CD4-positive, alpha-beta T cell (primary cell): ENCODE measurements at regions of chr6 and their contacts with region 1.

Region 1: DNA sequence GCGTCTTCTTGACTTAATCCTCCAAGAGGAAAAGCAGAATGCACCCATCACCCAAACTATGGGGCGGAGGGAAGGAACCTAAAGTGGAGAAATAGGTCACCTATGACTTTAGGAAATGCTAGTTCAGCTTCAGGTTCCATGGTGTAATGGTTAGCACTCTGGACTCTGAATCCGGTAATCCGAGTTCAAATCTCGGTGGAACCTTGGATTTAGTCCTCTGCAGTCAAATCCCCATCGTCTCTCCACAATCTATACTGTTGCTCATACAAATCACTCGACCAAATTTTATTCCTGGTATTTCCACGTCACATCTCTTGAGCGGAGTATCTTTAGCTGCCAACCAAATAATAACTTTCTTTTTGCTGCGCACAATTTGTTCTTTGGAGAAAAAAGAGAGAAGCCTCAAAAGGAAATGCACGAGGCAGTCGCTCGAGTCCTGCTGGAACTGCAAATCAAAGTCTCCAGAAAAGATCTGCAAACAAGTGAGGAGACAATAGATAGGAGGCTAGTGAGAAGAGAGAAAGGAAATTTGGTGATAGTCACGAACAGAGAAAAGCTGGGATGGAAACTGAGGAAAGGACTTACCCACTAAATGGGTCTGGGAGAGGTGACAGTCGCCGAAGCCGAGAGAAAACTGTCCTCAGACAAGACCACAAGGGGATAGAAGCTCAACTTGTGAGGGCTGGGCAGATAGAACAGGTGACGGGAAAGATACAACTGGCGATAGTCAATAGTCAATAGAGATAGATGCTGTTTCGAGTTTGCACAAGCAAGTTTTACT is 16.6 kb downstream of the POM121L2 start:
- DNase-seq: no peak
- ATAC-seq: no peak
- H3K4me3 ChIP-seq: no peak overlapping the region
- H3K4me3 Mint-ChIP-seq: peak overlapping the region; percentile 11
- H3K27ac ChIP-seq: no peak overlapping the region
- H3K27ac Mint-ChIP-seq: peak overlapping the region; percentile 2
- H3K4me1 ChIP-seq: no peaks in the 10 kb centered on the region
- H3K4me1 Mint-ChIP-seq: no peaks in the 10 kb centered on the region
- H3K27me3 ChIP-seq: peaks cover 77 to 88% of the 10 kb centered on the region in 2 experiments
- H3K27me3 Mint-ChIP-seq: peaks cover 95% of the 10 kb centered on the region
- CTCF ChIP-seq: no peak

Region 2: DNA sequence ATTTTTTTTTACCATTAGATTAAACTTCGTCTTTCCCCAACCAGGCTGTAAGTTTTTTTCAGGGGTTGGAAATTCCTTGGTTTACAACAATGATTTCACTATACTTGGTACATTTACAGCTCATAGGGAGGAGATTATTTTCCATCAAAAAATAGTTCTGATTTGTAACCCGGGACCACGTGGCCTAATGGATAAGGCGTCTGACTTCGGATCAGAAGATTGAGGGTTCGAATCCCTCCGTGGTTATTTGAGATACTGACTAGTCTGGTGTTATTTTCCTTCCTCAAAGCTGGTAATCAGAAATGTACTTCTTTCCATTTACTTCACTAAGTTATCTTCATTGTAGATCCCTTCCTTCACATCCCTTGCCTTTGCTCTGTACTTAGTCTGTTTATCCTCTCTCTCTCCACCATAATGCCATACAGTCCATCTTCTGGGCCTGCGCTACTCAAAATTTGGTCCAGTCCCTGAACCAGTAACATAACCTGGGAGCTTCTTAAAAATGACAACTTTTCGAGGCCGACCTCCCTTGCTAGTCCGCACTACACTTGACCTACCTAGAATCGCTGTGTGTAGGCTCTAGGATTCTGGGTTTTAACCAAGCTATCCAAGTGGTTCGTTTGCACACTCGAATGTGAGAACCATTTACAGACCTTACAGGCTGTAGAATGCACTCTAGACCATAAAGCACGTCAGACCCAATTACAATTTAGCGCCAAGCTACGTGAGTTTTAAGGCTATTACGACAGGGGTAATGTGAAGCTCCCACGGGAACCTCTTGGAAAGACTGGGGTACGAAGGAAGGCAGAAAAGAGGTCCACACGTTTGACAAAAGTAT is 972.6 kb before region 1 on chr6:
- CTCF ChIA-PET with region 1: no interaction called
- POLR2A ChIA-PET with region 1: no interaction called
- intact Hi-C with region 1: loop called in 1 of 2 experiments (anchors 10 kb)
- DNase-seq: peak in 10 of 14 experiments; percentile 20 to 88 (median 52)
- ATAC-seq: peak; percentile 75
- H3K4me3 ChIP-seq: peak overlapping the region; percentile 54
- H3K4me3 Mint-ChIP-seq: peak overlapping the region; percentile 96
- H3K27ac ChIP-seq: no peak overlapping the region
- H3K27ac Mint-ChIP-seq: peak overlapping the region; percentile 93
- H3K4me1 ChIP-seq: peaks cover 23% of the 10 kb centered on the region
- H3K4me1 Mint-ChIP-seq: peaks cover 30% of the 10 kb centered on the region
- H3K27me3 ChIP-seq: no peaks in the 10 kb centered on the region
- H3K27me3 Mint-ChIP-seq: peaks cover 35% of the 10 kb centered on the region
- CTCF ChIP-seq: no peak

Region 3: GRCh38 chr6:27002447-27002846 is 293.0 kb before region 1 on chr6:
- CTCF ChIA-PET with region 1: no interaction called
- POLR2A ChIA-PET with region 1: no interaction called
- intact Hi-C with region 1: no loop called
- DNase-seq: no peak
- ATAC-seq: no peak
- H3K4me3 ChIP-seq: no peak overlapping the region
- H3K4me3 Mint-ChIP-seq: no peak overlapping the region
- H3K27ac ChIP-seq: no peak overlapping the region
- H3K27ac Mint-ChIP-seq: no peak overlapping the region
- H3K4me1 ChIP-seq: no peaks in the 10 kb centered on the region
- H3K4me1 Mint-ChIP-seq: no peaks in the 10 kb centered on the region
- H3K27me3 ChIP-seq: peaks cover 6 to 8% of the 10 kb centered on the region in 2 experiments
- H3K27me3 Mint-ChIP-seq: peaks cover 26% of the 10 kb centered on the region
- CTCF ChIP-seq: no peak

Region 4: GRCh38 chr6:27230758-27231111 is 64.8 kb before region 1 on chr6:
- CTCF ChIA-PET with region 1: no interaction called
- POLR2A ChIA-PET with region 1: no interaction called
- intact Hi-C with region 1: no loop called
- DNase-seq: no peak
- ATAC-seq: no peak
- H3K4me3 ChIP-seq: no peak overlapping the region
- H3K4me3 Mint-ChIP-seq: no peak overlapping the region
- H3K27ac ChIP-seq: no peak overlapping the region
- H3K27ac Mint-ChIP-seq: no peak overlapping the region
- H3K4me1 ChIP-seq: no peaks in the 10 kb centered on the region
- H3K4me1 Mint-ChIP-seq: peaks cover 6% of the 10 kb centered on the region
- H3K27me3 ChIP-seq: peaks cover 50 to 76% of the 10 kb centered on the region in 2 experiments
- H3K27me3 Mint-ChIP-seq: peaks cover 84% of the 10 kb centered on the region
- CTCF ChIP-seq: no peak

Region 5: DNA sequence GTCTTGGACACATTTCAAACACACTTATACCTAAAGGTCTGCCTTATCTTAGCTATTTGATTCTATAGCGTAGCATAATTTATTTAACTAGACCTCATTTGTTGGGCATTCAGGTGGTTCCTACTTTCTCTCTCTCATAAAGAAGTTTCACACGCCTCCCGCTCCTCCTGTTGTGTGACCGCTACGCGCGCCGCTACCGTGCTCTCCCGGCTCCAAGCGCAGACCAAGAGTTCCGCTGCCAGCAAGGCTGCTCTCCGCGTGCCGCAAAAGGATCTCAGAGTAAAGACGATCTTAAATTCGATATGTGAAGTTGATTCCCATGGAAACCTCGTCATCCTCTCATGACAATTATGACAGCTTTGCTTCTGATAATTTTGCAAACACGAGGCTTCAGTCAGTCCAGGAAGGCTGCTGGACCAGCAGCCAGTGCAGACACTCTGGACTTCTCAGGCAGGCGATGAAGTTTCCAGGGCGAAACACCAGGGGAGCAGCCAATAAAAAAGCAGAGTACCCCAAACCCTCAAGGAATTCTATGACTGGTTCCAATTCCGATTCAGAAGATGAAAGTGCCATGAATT is 27.5 kb before region 1 on chr6:
- CTCF ChIA-PET with region 1: no interaction called
- POLR2A ChIA-PET with region 1: no interaction called
- intact Hi-C with region 1: no loop called
- DNase-seq: no peak
- ATAC-seq: no peak
- H3K4me3 ChIP-seq: no peak overlapping the region
- H3K4me3 Mint-ChIP-seq: no peak overlapping the region
- H3K27ac ChIP-seq: no peak overlapping the region
- H3K27ac Mint-ChIP-seq: no peak overlapping the region
- H3K4me1 ChIP-seq: no peaks in the 10 kb centered on the region
- H3K4me1 Mint-ChIP-seq: no peaks in the 10 kb centered on the region
- H3K27me3 ChIP-seq: peaks cover 36 to 68% of the 10 kb centered on the region in 2 experiments
- H3K27me3 Mint-ChIP-seq: peaks cover 74% of the 10 kb centered on the region
- CTCF ChIP-seq: no peak

Region 6: GRCh38 chr6:27280064-27280539 is 15.4 kb before region 1 on chr6:
- CTCF ChIA-PET with region 1: no interaction called
- POLR2A ChIA-PET with region 1: no interaction called
- intact Hi-C with region 1: loop called in 1 of 2 experiments (anchors 1 kb)
- DNase-seq: peak in 4 of 14 experiments; percentile 9 to 32 (median 24)
- ATAC-seq: no peak
- H3K4me3 ChIP-seq: no peak overlapping the region
- H3K4me3 Mint-ChIP-seq: peak overlapping the region; percentile 30
- H3K27ac ChIP-seq: no peak overlapping the region
- H3K27ac Mint-ChIP-seq: peak overlapping the region; percentile 45
- H3K4me1 ChIP-seq: peaks cover 2% of the 10 kb centered on the region
- H3K4me1 Mint-ChIP-seq: peaks cover 9% of the 10 kb centered on the region
- H3K27me3 ChIP-seq: peaks cover 76 to 87% of the 10 kb centered on the region in 2 experiments
- H3K27me3 Mint-ChIP-seq: peaks cover 95% of the 10 kb centered on the region
- CTCF ChIP-seq: no peak

Region 7: DNA sequence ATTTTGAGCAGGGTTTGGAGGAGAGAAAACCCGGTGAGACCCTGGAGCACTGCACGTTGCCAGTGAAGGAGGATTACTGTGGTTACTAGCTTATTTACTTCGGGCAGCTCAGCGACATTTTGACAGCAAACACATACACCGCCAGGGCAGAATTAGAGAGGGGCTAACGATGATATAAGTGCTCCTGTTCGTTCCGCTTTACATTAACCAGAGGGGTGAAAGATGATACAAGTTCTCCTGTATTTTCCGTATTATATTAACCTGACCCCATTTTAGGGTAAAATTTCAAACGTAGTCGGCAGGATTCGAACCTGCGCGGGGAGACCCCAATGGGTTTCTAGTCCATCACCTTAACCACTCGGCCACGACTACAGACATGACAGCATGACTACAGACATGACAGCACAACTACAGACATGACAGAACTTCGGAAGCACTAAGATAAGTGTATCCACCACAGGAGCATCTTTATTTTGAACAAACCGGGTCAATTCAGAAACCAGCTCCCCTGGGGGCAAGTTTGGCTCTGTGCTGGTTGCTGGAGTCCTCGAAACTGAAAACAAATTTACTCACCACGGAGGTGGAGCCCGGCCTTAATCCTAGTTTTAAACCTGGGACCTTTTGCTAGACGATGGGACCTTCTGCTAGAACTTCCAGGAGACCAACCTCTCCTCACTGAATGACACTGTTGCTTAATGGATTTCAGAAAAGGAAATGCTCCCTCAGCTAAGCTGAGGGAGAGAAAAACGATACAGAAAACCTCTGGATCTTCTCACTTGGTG is 257.8 kb after region 1 on chr6:
- CTCF ChIA-PET with region 1: no interaction called
- POLR2A ChIA-PET with region 1: no interaction called
- intact Hi-C with region 1: loop called in 1 of 2 experiments (anchors 10 kb)
- DNase-seq: no peak
- ATAC-seq: no peak
- H3K4me3 ChIP-seq: no peak overlapping the region
- H3K4me3 Mint-ChIP-seq: no peak overlapping the region
- H3K27ac ChIP-seq: no peak overlapping the region
- H3K27ac Mint-ChIP-seq: no peak overlapping the region
- H3K4me1 ChIP-seq: peaks cover 5% of the 10 kb centered on the region
- H3K4me1 Mint-ChIP-seq: peaks cover 4% of the 10 kb centered on the region
- H3K27me3 ChIP-seq: peaks cover 72 to 94% of the 10 kb centered on the region in 2 experiments
- H3K27me3 Mint-ChIP-seq: peaks cover 89% of the 10 kb centered on the region
- CTCF ChIP-seq: no peak

Region 8: DNA sequence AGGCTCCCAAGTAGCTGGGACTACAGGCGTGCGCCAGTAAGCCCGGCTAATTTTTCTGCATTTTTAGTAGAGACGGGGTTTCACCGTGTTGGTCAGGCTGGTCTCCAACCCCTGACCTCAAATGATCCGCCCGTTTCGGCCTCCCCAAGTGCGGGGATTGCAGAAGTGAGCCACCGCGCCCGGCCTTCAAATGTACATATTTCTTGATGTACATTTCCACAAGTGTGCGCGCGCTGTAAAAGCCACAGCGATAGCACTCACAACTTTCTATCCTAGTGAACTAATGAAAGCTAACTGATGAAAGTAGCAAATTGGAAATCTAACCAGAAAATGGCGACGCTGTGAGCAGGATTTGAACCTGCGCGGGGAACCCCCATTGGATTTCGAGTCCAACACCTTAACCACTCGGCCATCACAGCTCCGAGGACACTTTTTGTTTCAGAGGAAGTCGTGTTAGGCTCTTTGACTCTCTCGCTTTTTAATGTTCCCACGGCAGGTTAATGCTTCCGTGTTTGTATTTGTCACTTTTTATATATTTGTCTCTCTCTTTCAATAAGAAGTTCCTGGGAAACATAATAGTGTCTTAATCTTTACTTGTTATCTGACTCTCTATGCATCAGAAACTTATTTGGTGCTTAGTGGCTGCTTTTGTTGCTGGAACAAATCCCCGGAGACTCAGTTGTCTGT is 376.8 kb after region 1 on chr6:
- CTCF ChIA-PET with region 1: no interaction called
- POLR2A ChIA-PET with region 1: no interaction called
- intact Hi-C with region 1: loop called (anchors 2 to 5 kb)
- DNase-seq: peak in 1 of 14 experiments; percentile 50
- ATAC-seq: peak; percentile 41
- H3K4me3 ChIP-seq: no peak overlapping the region
- H3K4me3 Mint-ChIP-seq: peak overlapping the region; percentile 5
- H3K27ac ChIP-seq: no peak overlapping the region
- H3K27ac Mint-ChIP-seq: peak overlapping the region; percentile 3
- H3K4me1 ChIP-seq: peaks cover 28% of the 10 kb centered on the region
- H3K4me1 Mint-ChIP-seq: peaks cover 40% of the 10 kb centered on the region
- H3K27me3 ChIP-seq: peaks cover 66 to 94% of the 10 kb centered on the region in 2 experiments
- H3K27me3 Mint-ChIP-seq: peaks cover 98% of the 10 kb centered on the region
- CTCF ChIP-seq: no peak

Region 9: GRCh38 chr6:28769626-28770402 is 1474.3 kb after region 1 on chr6:
- CTCF ChIA-PET with region 1: no interaction called
- POLR2A ChIA-PET with region 1: no interaction called
- intact Hi-C with region 1: loop called in 1 of 2 experiments (anchors 10 kb)
- DNase-seq: no peak
- ATAC-seq: no peak
- H3K4me3 ChIP-seq: no peak overlapping the region
- H3K4me3 Mint-ChIP-seq: no peak overlapping the region
- H3K27ac ChIP-seq: no peak overlapping the region
- H3K27ac Mint-ChIP-seq: no peak overlapping the region
- H3K4me1 ChIP-seq: peaks cover 6% of the 10 kb centered on the region
- H3K4me1 Mint-ChIP-seq: peaks cover 7% of the 10 kb centered on the region
- H3K27me3 ChIP-seq: peaks cover 97 to 99% of the 10 kb centered on the region in 2 experiments
- H3K27me3 Mint-ChIP-seq: peaks cover 99% of the 10 kb centered on the region
- CTCF ChIP-seq: no peak

Region 10: DNA sequence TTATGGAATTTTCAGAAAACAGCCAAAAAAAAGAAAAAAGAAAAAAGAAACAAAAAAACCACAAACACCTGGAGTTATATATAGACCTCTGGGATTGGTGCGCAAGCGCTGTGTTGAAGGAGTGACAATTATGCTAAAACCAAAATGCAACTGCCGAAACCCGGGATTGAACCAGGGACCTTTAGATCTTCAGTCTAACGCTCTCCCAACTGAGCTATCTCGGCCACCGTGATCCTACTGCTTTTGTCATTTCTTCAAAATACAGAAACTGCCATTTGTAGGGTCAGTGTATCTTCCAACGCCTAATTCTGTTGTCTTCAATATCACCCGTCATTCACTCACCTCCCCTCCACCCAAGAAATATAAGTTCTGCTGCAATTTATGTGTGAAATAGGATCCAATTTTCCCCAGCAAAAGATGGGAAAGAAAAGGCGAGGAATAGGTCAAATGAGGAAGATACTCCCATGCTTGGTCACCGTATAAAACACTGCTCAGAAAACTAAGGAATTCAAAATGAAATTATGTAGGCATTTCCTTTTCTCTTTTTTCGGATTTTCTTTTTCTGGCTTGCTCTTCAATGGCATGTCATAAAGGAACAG is 1512.3 kb after region 1 on chr6:
- CTCF ChIA-PET with region 1: no interaction called
- POLR2A ChIA-PET with region 1: no interaction called
- intact Hi-C with region 1: loop called in 1 of 2 experiments (anchors 10 kb)
- DNase-seq: no peak
- ATAC-seq: no peak
- H3K4me3 ChIP-seq: no peak overlapping the region
- H3K4me3 Mint-ChIP-seq: peak overlapping the region; percentile 27
- H3K27ac ChIP-seq: no peak overlapping the region
- H3K27ac Mint-ChIP-seq: no peak overlapping the region
- H3K4me1 ChIP-seq: no peaks in the 10 kb centered on the region
- H3K4me1 Mint-ChIP-seq: no peaks in the 10 kb centered on the region
- H3K27me3 ChIP-seq: peaks cover 75 to 91% of the 10 kb centered on the region in 2 experiments
- H3K27me3 Mint-ChIP-seq: peaks cover 90% of the 10 kb centered on the region
- CTCF ChIP-seq: no peak